ENCODE measurements at regions of chr14 and their contacts with region 1.

Region 1: DNA sequence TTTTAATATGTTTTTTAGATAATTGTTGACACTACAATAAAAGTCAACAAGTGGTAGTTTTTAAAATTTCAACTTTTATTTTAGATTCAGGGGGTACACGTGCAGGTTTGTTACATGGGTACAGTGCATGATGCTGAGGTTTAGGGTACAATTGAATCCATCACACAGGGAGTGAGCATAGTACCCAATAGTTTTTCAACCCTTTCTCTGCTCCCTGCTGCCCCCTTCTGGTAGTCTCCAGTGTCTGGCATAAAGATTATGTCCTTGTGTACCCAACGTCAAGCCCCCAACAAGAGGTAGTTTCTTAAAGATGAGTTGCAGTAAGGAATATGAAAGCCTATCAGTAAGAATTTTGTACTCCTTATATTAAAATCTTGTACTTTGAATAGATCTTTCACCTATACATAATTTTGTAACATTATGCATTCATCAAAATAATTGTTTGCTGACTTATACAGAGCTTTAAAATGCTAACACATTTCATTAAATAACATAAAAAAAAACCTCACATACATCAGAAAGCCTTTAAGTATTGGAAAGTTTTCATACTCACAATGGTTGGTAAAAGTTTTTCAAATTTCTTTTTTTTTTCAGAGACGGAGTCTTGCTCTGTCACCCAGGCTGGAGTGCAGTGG is 5.4 kb upstream of the RALGAPA1 start:
- DNase-seq: peak; percentile 67
- H3K4me3 Mint-ChIP-seq: no peak overlapping the region
- H3K27ac Mint-ChIP-seq: no peak overlapping the region
- H3K4me1 Mint-ChIP-seq: peaks cover under 1% of the 10 kb centered on the region
- H3K27me3 Mint-ChIP-seq: no peaks in the 10 kb centered on the region

Region 2: GRCh38 chr14:35438910-35439713 is 375.4 kb before region 1 on chr14:
- intact Hi-C with region 1: loop called (anchors 1 kb)
- DNase-seq: no peak
- H3K4me3 Mint-ChIP-seq: no peak overlapping the region
- H3K27ac Mint-ChIP-seq: no peak overlapping the region
- H3K4me1 Mint-ChIP-seq: peaks cover 7% of the 10 kb centered on the region
- H3K27me3 Mint-ChIP-seq: no peaks in the 10 kb centered on the region

Measured in activated T-helper 1 cell treated with anti-CD3 and anti-CD28 coated beads, Interleukin-12 subunit alpha, Interleukin-12 subunit beta, Interleukin-2, Interleukin-4 antibody, amounts not matched to agents 30 ng/mL and 10 ng/mL and 1 ng/mL, durations not matched to agents 14 hours and 24 hours and 36 hours (primary cell).